Left cardiac atrium (tissue), 4 donors: ENCODE measurements at regions of chr5 and their contacts with region 1.

Region 1: DNA sequence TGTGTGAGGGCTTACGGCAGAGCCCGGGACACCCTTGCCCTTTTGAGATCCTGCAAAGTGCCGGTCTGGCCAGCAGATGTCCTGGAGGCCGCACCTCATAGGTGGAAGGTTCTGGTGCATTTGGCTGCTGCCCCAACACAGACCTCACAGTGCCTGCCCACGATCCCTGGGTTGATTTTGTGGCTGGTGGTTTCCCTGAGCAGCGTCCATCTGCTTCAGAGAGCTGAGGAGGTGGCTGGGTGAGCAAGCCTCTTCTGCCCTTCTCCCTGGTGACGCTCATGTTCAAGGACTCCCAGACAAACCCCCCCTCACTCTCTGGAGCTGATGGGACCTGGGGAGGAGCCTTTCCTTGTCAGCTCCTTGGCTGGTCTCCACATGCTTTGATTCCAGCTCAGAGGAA is 18.9 kb downstream of the BNIP1 start:
- DNase-seq: peak; percentile 32
- ATAC-seq: peak; percentile 16 to 69

Region 2: GRCh38 chr5:172764849-172765765 is 398.1 kb before region 1 on chr5:
- intact Hi-C with region 1: no loop called
- DNase-seq: peak; percentile 96
- ATAC-seq: peak; percentile 63 to 76

Region 3: GRCh38 chr5:173099461-173099860 is 63.8 kb before region 1 on chr5:
- intact Hi-C with region 1: no loop called
- DNase-seq: no peak
- ATAC-seq: no peak

Region 4: DNA sequence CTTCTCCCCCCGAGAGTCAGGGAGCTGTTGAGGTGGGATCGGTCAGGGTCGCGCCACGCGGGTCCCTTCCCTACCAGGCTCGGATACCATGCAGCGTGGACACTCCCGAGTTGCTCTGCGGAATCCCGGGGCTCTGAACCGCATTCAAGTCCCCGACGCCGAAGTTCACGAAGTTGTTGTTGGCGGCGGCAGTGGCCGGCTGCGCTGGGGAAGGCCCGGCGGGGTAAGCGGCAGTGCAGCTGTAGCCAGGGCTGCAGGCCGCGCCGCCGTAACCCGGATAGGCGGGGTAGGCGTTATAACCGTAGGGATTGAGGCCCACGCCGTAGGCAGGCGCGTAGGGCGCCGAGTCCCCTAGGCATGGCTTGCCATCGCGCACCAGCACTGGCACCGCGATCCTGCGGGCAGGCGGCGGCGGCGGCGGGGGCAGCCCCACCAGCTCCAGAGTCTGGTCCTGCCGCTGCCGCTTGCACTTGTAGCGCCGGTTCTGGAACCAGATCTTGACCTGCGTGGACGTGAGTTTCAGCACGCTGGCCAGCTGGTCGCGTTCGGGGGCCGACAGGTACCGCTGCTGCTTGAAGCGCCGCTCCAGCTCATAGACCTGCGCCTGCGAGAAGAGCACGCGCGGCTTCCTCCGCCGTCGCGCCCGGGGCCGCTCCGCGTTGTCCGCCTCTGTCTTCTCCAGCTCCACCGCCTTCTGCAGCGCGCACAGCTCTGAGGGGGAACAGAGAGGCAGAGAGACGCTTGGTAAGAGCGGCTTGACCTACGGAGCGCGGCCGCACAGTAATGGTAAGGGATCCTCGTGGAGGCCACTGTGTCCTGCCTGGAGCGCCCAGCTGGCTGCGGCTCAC is 69.5 kb after region 1 on chr5:
- intact Hi-C with region 1: loop called (anchors 5 to 10 kb)
- DNase-seq: no peak
- ATAC-seq: no peak

Region 5: DNA sequence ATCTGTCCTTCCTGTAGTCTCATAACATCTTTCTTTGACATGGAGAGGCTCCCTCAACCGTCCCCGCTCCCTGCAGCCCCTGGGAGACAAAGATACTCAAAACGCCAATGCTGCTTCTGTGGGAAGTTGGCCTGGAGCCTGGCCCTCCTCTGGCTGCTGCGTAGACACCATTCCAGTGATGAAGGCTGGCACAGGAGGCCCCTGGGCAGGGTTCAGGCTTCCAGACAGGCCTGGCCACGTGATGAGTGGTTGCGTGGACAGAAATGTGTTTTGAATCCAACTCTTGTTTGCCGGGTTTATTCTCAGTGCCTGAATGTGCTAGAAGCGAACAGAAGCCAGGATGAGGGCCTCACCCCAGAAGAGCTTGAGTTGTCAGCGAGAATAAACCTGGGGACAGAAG is 115.0 kb after region 1 on chr5:
- intact Hi-C with region 1: loop called (anchors 2 to 5 kb)
- DNase-seq: peak; percentile 80
- ATAC-seq: peak; percentile 92

Region 6: DNA sequence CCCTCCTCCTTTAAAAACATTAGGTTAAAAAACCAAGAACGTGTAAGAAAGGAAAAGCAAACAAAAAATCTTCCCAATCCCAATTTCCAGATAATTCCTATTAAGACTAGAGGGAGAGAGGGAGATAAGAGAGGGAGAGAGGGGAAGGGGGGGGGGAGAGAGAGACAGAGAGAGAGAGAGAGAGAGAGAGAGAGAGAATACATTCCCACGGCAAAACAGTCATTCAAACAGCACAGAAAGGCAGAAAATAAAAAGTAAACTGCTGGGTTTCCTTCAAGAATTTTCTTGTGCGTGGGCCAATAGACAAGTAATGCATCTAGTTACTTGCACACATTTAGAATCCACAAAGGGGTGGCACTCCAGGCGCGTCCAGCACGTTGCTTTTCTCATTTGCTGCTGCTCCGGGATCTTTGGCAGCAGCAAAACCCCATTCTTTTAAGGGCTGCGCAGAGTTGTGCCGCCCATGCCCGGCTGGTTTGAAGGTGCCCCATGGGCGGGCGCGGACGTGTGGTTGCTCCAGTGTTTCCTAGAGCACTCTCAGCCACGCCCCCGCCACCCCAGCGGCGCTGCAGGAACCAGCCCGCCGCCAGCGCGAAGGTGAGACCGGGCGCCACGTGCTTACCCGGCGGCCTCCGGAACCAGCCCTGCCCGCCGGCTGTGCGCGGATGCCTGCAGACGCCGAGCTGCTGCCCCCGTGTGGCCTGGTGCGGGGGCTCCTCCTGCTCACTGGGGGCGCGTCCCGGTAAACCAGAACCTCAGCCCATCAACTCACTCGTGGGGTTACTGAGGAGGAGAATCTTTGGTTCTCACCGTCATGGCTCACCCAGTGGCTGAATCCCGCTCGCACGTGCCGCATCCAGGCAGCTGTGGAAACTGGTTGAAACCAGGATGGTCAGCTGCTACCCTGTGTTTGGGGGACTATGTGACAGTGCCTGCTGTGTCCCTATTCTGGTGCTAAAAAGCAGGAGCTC is 120.4 kb after region 1 on chr5:
- intact Hi-C with region 1: loop called (anchors 2 to 5 kb)
- DNase-seq: peak; percentile 82
- ATAC-seq: peak; percentile 91 to 92

Region 7: GRCh38 chr5:173429489-173430150 is 266.4 kb after region 1 on chr5:
- intact Hi-C with region 1: no loop called
- DNase-seq: no peak
- ATAC-seq: no peak